ENCODE measurements at regions of chrX and their contacts with region 1.

Region 1: DNA sequence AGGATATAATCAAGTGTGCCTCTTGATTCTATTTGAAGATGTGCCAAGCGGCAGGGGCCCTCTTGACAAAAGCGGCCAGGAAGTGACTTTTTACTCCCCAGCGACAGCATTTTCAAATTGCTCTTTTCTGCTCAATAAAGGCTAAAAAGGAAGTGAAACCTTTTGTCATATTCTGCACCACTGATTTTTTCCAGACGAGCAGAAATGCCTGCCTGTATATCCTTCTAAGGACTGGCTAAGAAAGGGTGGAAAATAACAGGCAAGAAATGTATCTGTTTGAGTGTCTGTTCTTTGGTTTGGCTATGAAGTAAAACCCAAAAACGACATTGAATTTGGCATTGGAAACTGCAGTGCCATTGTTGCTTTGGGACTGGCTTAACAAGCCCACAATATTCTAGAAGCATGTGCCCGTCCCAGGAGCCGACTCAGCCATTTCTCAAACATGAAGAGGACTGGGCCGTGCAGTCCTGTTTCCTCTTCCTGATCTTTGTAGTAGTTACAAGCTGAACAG is 25.4 kb downstream of the TMSB4X start:
- DNase-seq: peak; percentile 90
- ATAC-seq: peak; percentile 52
- H3K4me3 ChIP-seq: peak overlapping the region; percentile 9; the same call in 1 of the 2 replicates
- H3K27ac ChIP-seq: peak overlapping the region; percentile 91
- H3K4me1 ChIP-seq: peaks cover 69% of the 10 kb centered on the region
- H3K27me3 ChIP-seq: no peaks in the 10 kb centered on the region
- CTCF ChIP-seq: no peak
- EP300 ChIP-seq: peak; percentile 73; a peak in 2 of 4 replicates
- POLR2A ChIP-seq: no peak
- RAD21 ChIP-seq: peak; percentile 10; the same call in 1 of the 2 replicates

Region 2: GRCh38 chrX:12955882-12956703 is 44.3 kb before region 1 on chrX:
- CTCF ChIA-PET with region 1: interaction called, 123 read pairs
- POLR2A ChIA-PET with region 1: interaction called, 13 read pairs
- RAD21 ChIA-PET with region 1: interaction called, 80 read pairs
- SMC1A ChIA-PET with region 1: interaction called, 409 read pairs
- in situ Hi-C with region 1: no loop called
- intact Hi-C with region 1: no loop called
- DNase-seq: peak; percentile 77
- ATAC-seq: peak; percentile 59
- H3K4me3 ChIP-seq: peak overlapping the region; percentile 32
- H3K27ac ChIP-seq: peak overlapping the region; percentile 99
- H3K4me1 ChIP-seq: peaks cover 42% of the 10 kb centered on the region
- H3K27me3 ChIP-seq: no peaks in the 10 kb centered on the region
- CTCF ChIP-seq: no peak
- EP300 ChIP-seq: peak; percentile 48 to 62; a peak in 2 of 4 replicates
- POLR2A ChIP-seq: peak; percentile 30
- RAD21 ChIP-seq: no peak

Region 3: GRCh38 chrX:12974796-12975669 is 25.3 kb before region 1 on chrX and contains the start of gene TMSB4X:
- CTCF ChIA-PET with region 1: interaction called, 7 read pairs
- POLR2A ChIA-PET with region 1: interaction called, 157 read pairs
- RAD21 ChIA-PET with region 1: interaction called, 525 read pairs
- SMC1A ChIA-PET with region 1: interaction called, 595 read pairs
- in situ Hi-C with region 1: no loop called
- intact Hi-C with region 1: loop called (anchors 1 kb)
- DNase-seq: no peak
- ATAC-seq: peak; percentile 35
- H3K4me3 ChIP-seq: peak within 1 kb of the TSS; percentile 81
- H3K27ac ChIP-seq: peak within 1 kb of the TSS; percentile 90
- H3K4me1 ChIP-seq: peaks cover 6% of the 10 kb centered on the region; the same call in 1 of the 2 replicates
- H3K27me3 ChIP-seq: no peaks in the 10 kb centered on the region
- CTCF ChIP-seq: no peak
- EP300 ChIP-seq: no peak
- POLR2A ChIP-seq: peak; percentile 97
- RAD21 ChIP-seq: no peak
- polyA plus RNA-seq, gene TMSB4X: 32,576 to 35,408 TPM

Region 4: GRCh38 chrX:12984629-12985319 is 15.6 kb before region 1 on chrX:
- CTCF ChIA-PET with region 1: interaction called, 35 read pairs
- POLR2A ChIA-PET with region 1: interaction called, 157 read pairs
- RAD21 ChIA-PET with region 1: interaction called, 525 read pairs
- SMC1A ChIA-PET with region 1: interaction called, 595 read pairs
- in situ Hi-C with region 1: no loop called
- intact Hi-C with region 1: loop called (anchors 1 kb)
- DNase-seq: no peak
- ATAC-seq: peak; percentile 74
- H3K4me3 ChIP-seq: peak overlapping the region; percentile 26; the same call in 1 of the 2 replicates
- H3K27ac ChIP-seq: peak overlapping the region; percentile 98
- H3K4me1 ChIP-seq: peaks cover 68% of the 10 kb centered on the region
- H3K27me3 ChIP-seq: no peaks in the 10 kb centered on the region
- CTCF ChIP-seq: no peak
- EP300 ChIP-seq: peak; percentile 68 to 87; a peak in 3 of 4 replicates
- POLR2A ChIP-seq: no peak
- RAD21 ChIP-seq: no peak; the same call in 1 of the 2 replicates

Region 5: DNA sequence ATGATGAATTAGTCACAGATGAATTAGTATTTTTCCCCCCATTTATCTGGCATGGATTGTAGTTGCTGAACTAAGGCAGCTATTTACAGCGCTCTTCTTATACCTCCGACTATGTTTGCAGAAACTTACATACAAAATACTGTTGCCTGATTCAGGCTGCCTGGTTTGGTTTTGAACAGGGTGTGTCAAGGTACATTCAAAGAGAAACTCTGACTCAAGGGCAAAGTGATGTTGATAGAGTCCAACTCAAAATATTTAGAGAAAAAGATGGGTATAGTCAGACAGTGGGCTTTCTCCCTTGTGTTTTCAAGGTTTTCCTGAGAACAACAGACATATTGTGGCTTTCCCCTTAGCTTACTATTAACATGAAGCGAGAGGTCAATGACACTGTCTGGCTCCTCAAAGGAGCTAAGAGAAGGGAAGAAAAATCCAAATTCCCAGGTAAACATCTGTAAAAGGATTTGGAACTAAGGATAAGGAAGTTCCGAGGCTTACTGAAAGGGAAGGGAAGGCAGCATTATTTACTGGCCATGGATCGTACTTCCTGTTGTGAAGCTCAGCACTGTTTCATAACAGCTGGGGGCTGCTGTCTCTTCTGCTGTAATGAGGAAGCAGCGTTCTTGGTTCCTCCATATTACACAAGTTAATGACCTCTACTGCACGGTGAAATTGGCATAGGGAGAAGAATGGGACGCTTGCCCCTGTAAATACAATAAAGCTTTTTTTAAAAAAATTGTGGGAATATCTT is 13.2 kb after region 1 on chrX:
- CTCF ChIA-PET with region 1: interaction called, 4 read pairs
- POLR2A ChIA-PET with region 1: interaction called, 10 read pairs
- RAD21 ChIA-PET with region 1: interaction called, 10 read pairs
- SMC1A ChIA-PET with region 1: interaction called, 83 read pairs
- in situ Hi-C with region 1: no loop called
- intact Hi-C with region 1: no loop called
- DNase-seq: no peak
- ATAC-seq: peak; percentile 87
- H3K4me3 ChIP-seq: peak overlapping the region; percentile 14
- H3K27ac ChIP-seq: peak overlapping the region; percentile 96
- H3K4me1 ChIP-seq: peaks cover 63% of the 10 kb centered on the region
- H3K27me3 ChIP-seq: no peaks in the 10 kb centered on the region
- CTCF ChIP-seq: no peak
- EP300 ChIP-seq: 0 out of 4 replicates have a peak, but pooled peaks of 1 of the 2 experiments have one; percentile 2
- POLR2A ChIP-seq: no peak
- RAD21 ChIP-seq: no peak

Region 6: GRCh38 chrX:13022926-13023325 is 22.6 kb after region 1 on chrX:
- CTCF ChIA-PET with region 1: interaction called, 15 read pairs
- POLR2A ChIA-PET with region 1: interaction called, 25 read pairs
- RAD21 ChIA-PET with region 1: interaction called, 81 read pairs
- SMC1A ChIA-PET with region 1: interaction called, 189 read pairs
- in situ Hi-C with region 1: no loop called
- intact Hi-C with region 1: no loop called
- DNase-seq: no peak
- ATAC-seq: peak; percentile 91
- H3K4me3 ChIP-seq: no peak overlapping the region
- H3K27ac ChIP-seq: peak overlapping the region; percentile 47
- H3K4me1 ChIP-seq: peaks cover 43% of the 10 kb centered on the region
- H3K27me3 ChIP-seq: no peaks in the 10 kb centered on the region
- CTCF ChIP-seq: no peak
- EP300 ChIP-seq: peak in 1 of 2 experiments; percentile 75; a peak in 2 of 4 replicates
- POLR2A ChIP-seq: no peak
- RAD21 ChIP-seq: no peak